Activated B cell treated with CpG ODN at 0.5 μM for 24 hours (primary cell): ENCODE measurements at regions of chr3 and their contacts with region 1.

Region 1: DNA sequence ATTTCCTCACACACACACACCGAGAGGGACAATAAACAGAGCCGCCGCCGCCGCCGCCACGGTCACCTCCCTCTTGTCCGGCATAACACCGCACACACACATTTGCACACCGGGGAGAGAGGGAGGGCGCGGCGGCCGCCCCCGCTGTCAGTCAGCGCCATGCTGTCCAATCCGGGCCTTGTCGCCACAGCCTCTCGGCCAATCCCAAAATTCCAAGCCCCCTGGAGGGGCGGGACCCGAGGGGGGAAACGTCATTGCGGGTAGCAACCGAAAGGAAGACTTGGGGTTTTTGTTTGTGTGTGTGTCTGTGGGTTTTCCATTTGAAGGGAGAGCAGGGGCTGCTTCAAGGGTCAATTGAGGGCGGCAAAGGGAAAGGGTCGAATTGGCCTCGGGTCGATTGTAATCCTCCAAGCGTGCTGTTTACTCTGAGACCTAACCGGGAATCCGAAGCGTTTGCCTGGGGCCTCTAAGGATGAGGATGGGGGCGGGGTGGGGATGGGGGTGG is at the start of gene TOP2B:
- DNase-seq: peak; percentile 89
- ATAC-seq: peak; percentile 85
- H3K4me3 Mint-ChIP-seq: peak within 1 kb of the TSS; percentile 93
- H3K27ac Mint-ChIP-seq: peak within 1 kb of the TSS; percentile 99
- H3K4me1 Mint-ChIP-seq: peaks cover 53% of the 10 kb centered on the region
- H3K27me3 Mint-ChIP-seq: no peaks in the 10 kb centered on the region
- CTCF ChIP-seq: no peak
- total RNA-seq, gene TOP2B: 117 and 125 TPM in 2 replicates

Region 2: DNA sequence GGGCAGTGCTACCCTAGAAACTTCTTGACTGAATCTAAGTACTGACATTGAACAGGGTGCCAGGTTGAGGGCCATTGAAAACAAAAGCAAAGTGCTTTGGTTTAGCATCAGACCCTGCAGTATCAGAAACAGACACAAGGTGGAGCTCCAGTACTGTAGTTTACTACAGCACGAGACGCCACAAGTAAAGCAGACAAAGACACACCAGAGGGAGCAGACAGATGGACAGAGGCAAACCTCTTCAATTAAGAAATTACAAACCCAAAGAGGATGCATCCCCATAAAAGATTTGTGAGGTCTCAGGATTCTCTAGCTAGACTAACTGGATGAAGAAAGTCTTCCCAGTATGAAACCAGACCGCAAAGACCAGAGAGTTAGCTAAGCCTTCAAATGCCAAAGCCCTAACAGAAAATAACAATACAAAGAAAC is 16.7 kb before region 1 on chr3:
- CTCF ChIA-PET with region 1: interaction called, 14 read pairs
- POLR2A ChIA-PET with region 1: interaction called, 5 read pairs
- intact Hi-C with region 1: loop called (anchors 1 kb)
- DNase-seq: no peak
- ATAC-seq: peak; percentile 94
- H3K4me3 Mint-ChIP-seq: no peak overlapping the region
- H3K27ac Mint-ChIP-seq: no peak overlapping the region
- H3K4me1 Mint-ChIP-seq: peaks cover 37% of the 10 kb centered on the region
- H3K27me3 Mint-ChIP-seq: no peaks in the 10 kb centered on the region
- CTCF ChIP-seq: no peak

Region 3: GRCh38 chr3:25768851-25769250 is 104.0 kb after region 1 on chr3:
- CTCF ChIA-PET with region 1: no interaction called
- POLR2A ChIA-PET with region 1: interaction called, 3 read pairs
- intact Hi-C with region 1: loop called (anchors 1 kb)
- DNase-seq: no peak
- ATAC-seq: peak; percentile 92
- H3K4me3 Mint-ChIP-seq: peak overlapping the region; percentile 79
- H3K27ac Mint-ChIP-seq: peak overlapping the region; percentile 92
- H3K4me1 Mint-ChIP-seq: peaks cover 44% of the 10 kb centered on the region
- H3K27me3 Mint-ChIP-seq: no peaks in the 10 kb centered on the region
- CTCF ChIP-seq: no peak

Region 4: DNA sequence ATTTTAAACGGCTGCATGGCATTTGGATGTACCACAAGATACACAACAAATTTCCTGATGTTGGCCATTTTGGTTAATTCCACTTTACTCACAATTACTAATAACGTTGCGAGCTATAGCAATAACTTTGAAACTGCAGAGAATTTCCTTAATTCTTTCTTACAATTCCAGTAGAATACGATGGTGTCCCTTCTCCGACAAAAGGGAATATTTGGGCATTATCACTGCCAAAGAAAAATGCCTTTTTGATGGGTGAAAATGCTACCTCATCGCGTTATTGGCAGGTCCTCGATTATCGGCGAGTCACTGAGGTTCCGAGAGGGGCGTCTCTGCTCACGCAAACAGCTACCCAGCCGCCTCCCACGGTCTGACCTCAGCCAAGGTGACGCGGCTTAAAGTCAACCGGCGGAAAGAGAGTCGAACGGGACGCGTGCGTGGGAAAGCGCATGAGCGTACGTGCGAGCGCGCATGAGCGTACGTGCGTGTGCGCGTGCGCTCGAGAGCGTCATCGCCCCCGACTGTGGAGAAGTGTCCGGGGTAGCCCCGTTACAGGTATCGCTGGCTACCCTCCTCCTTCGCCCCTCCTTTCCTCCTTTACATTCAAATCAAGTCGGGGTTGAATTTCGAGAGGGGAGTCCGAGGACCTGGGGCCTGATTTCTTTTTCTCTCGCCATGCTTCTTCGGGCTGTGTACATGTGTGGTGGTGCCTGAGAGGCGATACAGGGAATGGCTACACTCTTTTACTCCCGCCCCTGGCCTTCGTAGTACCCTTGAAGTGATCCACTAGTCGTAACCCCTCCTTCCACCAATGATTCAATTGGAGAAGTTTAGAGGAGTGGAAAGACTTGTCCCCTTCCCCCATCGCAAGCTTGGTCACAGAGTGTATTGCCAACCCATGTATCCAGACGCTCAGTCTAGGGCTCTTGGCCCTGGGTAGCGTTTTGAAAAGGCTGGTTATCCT is 125.0 kb after region 1 on chr3 and contains the start of gene OXSM:
- CTCF ChIA-PET with region 1: no interaction called
- POLR2A ChIA-PET with region 1: interaction called, 4 read pairs
- intact Hi-C with region 1: loop called (anchors 1 kb)
- DNase-seq: peak; percentile 82
- ATAC-seq: peak; percentile 90
- H3K4me3 Mint-ChIP-seq: peak within 1 kb of the TSS; percentile 95
- H3K27ac Mint-ChIP-seq: peak within 1 kb of the TSS; percentile 99
- H3K4me1 Mint-ChIP-seq: peaks cover 34% of the 10 kb centered on the region
- H3K27me3 Mint-ChIP-seq: no peaks in the 10 kb centered on the region
- CTCF ChIP-seq: no peak
- total RNA-seq, gene OXSM: 12.6 and 14.2 TPM in 2 replicates

Region 5: GRCh38 chr3:25831578-25831977 is 166.7 kb after region 1 on chr3:
- CTCF ChIA-PET with region 1: no interaction called
- POLR2A ChIA-PET with region 1: no interaction called
- intact Hi-C with region 1: no loop called
- DNase-seq: no peak
- ATAC-seq: no peak
- H3K4me3 Mint-ChIP-seq: no peak overlapping the region
- H3K27ac Mint-ChIP-seq: no peak overlapping the region
- H3K4me1 Mint-ChIP-seq: peaks cover 6% of the 10 kb centered on the region
- H3K27me3 Mint-ChIP-seq: no peaks in the 10 kb centered on the region
- CTCF ChIP-seq: no peak

Region 6: DNA sequence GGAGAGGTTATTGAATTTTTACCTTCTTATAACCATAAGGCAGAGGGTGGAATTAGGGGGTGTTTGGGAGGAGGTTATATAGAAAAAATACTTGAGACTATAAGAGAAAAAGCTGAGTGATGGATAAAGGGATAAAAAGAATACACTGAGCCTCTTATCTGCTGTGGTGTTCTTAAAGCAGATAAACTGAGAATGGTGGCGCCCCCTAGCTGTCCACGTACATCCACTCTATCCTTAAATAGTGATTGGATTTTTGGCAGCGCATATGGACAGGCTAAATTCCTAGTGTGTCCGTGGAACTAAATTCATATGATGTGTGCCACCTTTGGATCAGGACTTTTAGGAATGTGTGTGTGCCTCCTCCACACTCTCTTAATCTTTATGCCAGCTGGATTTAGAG is 246.1 kb after region 1 on chr3:
- CTCF ChIA-PET with region 1: no interaction called
- POLR2A ChIA-PET with region 1: no interaction called
- intact Hi-C with region 1: loop called (anchors 5 kb)
- DNase-seq: no peak
- ATAC-seq: no peak
- H3K4me3 Mint-ChIP-seq: no peak overlapping the region
- H3K27ac Mint-ChIP-seq: no peak overlapping the region
- H3K4me1 Mint-ChIP-seq: no peaks in the 10 kb centered on the region
- H3K27me3 Mint-ChIP-seq: peaks cover 3% of the 10 kb centered on the region
- CTCF ChIP-seq: no peak